A673 (cell line): ENCODE measurements at regions of chr4 and their contacts with region 1.

Region 1: DNA sequence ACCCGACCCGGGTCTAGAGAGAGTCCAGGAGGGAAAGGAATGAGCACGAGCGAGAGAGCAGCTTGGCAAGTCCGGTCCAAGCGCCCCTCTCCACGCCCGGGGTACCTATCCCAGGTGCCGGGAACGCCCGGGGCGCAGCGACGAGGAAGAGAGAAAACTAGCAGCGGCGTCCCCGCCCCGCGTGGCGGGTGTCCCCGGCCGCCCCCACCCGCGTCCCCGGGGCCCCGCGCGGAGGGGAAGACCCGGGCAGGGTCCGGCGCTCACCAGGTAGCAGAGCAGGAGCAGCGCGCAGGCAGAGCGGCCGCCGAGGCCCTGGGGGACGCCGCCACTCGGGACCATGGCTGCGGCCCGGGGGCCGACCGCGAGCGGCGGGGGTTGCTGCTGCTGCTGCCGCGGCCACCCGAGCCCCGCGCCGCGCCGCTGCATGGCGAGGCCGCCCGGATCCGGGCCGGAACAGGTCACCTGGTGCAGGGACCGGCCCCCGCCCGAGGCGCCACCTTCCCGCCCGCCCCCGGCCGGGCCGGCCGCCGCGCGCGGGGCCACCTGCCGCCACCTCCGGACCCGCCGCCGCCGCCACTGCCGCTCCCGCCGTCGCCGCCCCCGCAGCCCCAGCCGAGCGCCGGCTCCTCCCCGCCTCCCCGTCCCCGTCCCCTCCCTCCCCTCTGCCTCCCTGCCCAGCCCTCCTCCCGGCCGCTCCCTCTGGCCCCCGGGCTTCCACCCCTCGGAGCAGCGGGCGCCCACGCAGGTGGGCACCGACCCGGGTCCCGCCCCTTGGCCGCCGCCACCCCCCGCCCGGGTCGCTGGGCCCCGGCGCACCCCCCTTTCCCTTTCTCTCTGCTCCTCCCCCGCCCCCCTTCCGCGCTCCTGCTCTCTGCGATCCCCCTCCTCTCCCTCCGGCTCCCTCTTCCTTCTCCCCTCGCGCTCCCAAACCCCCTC is at the start of gene SEL1L3:
- DNase-seq: peak; percentile 57
- H3K4me3 ChIP-seq: peak within 1 kb of the TSS; percentile 87
- H3K27ac ChIP-seq: peak within 1 kb of the TSS; percentile 76
- H3K4me1 ChIP-seq: peaks cover 22% of the 10 kb centered on the region
- H3K27me3 ChIP-seq: no peaks in the 10 kb centered on the region
- CTCF ChIP-seq: no peak
- total RNA-seq, gene SEL1L3: 35.8 and 40.0 TPM in 2 replicates

Region 2: GRCh38 chr4:25484243-25484721 is 378.4 kb before region 1 on chr4:
- CTCF ChIA-PET with region 1: no interaction called
- POLR2A ChIA-PET with region 1: no interaction called
- intact Hi-C with region 1: no loop called
- DNase-seq: peak; percentile 9
- H3K4me3 ChIP-seq: no peak overlapping the region
- H3K27ac ChIP-seq: no peak overlapping the region
- H3K4me1 ChIP-seq: peaks cover 8% of the 10 kb centered on the region
- H3K27me3 ChIP-seq: no peaks in the 10 kb centered on the region
- CTCF ChIP-seq: no peak

Region 3: DNA sequence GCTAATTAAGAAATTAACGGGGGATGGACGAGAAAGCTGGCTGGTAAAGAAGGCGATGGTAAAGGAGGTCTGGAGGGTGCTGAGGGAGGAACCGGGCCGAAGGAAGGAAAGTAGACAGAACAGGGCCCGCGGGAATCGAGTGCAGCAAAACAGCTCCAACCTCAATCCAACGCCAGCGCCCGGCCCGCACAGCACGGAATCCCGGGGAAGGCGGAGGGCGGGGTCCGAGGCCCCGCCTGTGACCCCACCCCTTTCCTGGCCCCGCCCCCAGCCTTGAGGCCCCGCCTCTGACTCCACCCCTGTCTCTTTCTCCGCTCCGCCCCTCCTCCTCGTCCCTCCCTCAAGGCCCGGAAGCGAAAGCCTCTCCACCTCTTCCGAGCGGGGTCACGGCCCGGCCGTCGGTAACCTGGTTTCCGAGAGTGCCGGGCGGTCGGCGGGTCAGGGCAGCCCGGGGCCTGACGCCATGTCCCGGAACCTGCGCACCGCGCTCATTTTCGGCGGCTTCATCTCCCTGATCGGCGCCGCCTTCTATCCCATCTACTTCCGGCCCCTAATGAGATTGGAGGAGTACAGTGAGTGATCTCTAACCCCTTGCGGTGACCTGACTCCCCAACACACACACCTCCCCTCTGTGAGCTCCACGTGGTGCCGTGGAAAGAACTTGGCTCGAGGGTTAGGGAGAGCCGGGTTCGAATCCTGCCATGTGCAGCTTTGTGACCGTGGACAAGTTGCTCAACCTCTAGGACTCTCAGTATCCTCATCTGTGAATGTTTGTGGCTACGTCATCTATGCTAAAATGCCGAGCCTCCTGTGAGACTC is 51.4 kb after region 1 on chr4 and contains the start of gene SMIM20:
- CTCF ChIA-PET with region 1: no interaction called
- POLR2A ChIA-PET with region 1: no interaction called
- intact Hi-C with region 1: loop called (anchors 5 kb)
- DNase-seq: peak; percentile 82
- H3K4me3 ChIP-seq: peak within 1 kb of the TSS; percentile 68
- H3K27ac ChIP-seq: peak within 1 kb of the TSS; percentile 56
- H3K4me1 ChIP-seq: peaks cover 8% of the 10 kb centered on the region
- H3K27me3 ChIP-seq: no peaks in the 10 kb centered on the region
- CTCF ChIP-seq: no peak
- total RNA-seq, gene SMIM20: 25.2 and 30.2 TPM in 2 replicates